ENCODE measurements at regions of chr12 and their contacts with region 1.

Region 1: GRCh38 chr12:92208613-92209121 is 63.0 kb upstream of the BTG1 start:
- DNase-seq: peak; percentile 42
- H3K4me3 Mint-ChIP-seq: peak overlapping the region; percentile 66
- H3K27ac Mint-ChIP-seq: peak overlapping the region; percentile 86
- H3K4me1 Mint-ChIP-seq: peaks cover 45% of the 10 kb centered on the region
- H3K27me3 Mint-ChIP-seq: no peaks in the 10 kb centered on the region

Region 2: DNA sequence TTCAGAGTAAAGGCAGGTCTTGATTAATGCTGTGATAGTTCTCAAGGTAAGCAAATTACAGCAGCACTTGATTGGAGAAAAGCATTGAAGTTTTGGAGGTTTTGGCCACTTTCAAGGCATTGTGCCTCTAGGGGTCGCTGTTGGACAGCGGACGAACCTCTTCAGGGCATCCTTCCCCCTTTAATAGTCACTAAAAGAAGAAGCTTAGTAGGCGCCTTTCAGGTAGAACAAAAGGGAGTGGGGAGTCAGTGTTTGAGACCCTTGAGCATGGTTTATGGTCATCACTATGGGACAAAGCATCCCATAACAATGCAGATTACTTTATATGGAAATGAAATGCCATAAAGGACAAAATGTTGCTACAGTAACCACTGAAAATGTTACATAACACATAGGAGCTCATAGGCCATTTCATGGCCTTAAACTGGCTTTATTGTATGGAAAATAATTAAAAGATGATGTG is 826.6 kb before region 1 on chr12:
- CTCF ChIA-PET with region 1: no interaction called
- intact Hi-C with region 1: loop called (anchors 1 kb)
- DNase-seq: peak; percentile 92
- H3K4me3 Mint-ChIP-seq: peak overlapping the region; percentile 76
- H3K27ac Mint-ChIP-seq: no peak overlapping the region
- H3K4me1 Mint-ChIP-seq: peaks cover 5% of the 10 kb centered on the region
- H3K27me3 Mint-ChIP-seq: no peaks in the 10 kb centered on the region

Region 3: GRCh38 chr12:91811481-91812287 is 397.0 kb before region 1 on chr12:
- CTCF ChIA-PET with region 1: interaction called, 7 read pairs
- intact Hi-C with region 1: loop called (anchors 2 kb)
- DNase-seq: peak; percentile 86
- H3K4me3 Mint-ChIP-seq: peak overlapping the region; percentile 23
- H3K27ac Mint-ChIP-seq: peak overlapping the region; percentile 76
- H3K4me1 Mint-ChIP-seq: peaks cover 21% of the 10 kb centered on the region
- H3K27me3 Mint-ChIP-seq: no peaks in the 10 kb centered on the region

Region 4: GRCh38 chr12:91833780-91834359 is 374.8 kb before region 1 on chr12:
- CTCF ChIA-PET with region 1: no interaction called
- intact Hi-C with region 1: no loop called
- DNase-seq: no peak
- H3K4me3 Mint-ChIP-seq: no peak overlapping the region
- H3K27ac Mint-ChIP-seq: no peak overlapping the region
- H3K4me1 Mint-ChIP-seq: peaks cover 17% of the 10 kb centered on the region
- H3K27me3 Mint-ChIP-seq: no peaks in the 10 kb centered on the region

Region 5: GRCh38 chr12:91991399-91992187 is 217.1 kb before region 1 on chr12:
- CTCF ChIA-PET with region 1: interaction called, 3 read pairs
- intact Hi-C with region 1: loop called (anchors 2 kb)
- DNase-seq: no peak
- H3K4me3 Mint-ChIP-seq: no peak overlapping the region
- H3K27ac Mint-ChIP-seq: no peak overlapping the region
- H3K4me1 Mint-ChIP-seq: peaks cover 61% of the 10 kb centered on the region
- H3K27me3 Mint-ChIP-seq: no peaks in the 10 kb centered on the region

Region 6: DNA sequence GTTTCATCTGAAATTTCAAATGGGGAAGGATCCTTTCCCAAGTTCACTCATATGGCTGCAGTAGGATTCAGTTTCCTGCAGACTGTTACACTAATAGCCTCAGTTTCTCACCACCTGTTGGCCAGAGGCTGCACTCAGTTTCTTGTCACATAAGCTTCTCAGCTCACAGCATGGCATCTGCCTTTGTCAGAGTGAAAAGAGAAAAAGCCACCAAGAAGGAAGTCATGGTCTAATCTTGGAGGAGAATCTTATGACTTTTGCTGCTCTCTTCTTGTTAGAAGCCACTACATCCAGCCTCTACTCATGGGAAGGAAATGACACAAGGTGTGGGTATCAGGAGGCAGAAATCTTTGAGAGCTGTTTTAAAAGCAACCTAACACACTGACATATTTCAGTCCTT is 23.6 kb before region 1 on chr12:
- CTCF ChIA-PET with region 1: no interaction called
- intact Hi-C with region 1: loop called (anchors 1 kb)
- DNase-seq: peak; percentile 62
- H3K4me3 Mint-ChIP-seq: peak overlapping the region; percentile 36
- H3K27ac Mint-ChIP-seq: peak overlapping the region; percentile 89
- H3K4me1 Mint-ChIP-seq: peaks cover 64% of the 10 kb centered on the region
- H3K27me3 Mint-ChIP-seq: no peaks in the 10 kb centered on the region

Region 7: GRCh38 chr12:92244036-92244435 is 35.4 kb after region 1 on chr12:
- CTCF ChIA-PET with region 1: no interaction called
- intact Hi-C with region 1: no loop called
- DNase-seq: no peak
- H3K4me3 Mint-ChIP-seq: no peak overlapping the region
- H3K27ac Mint-ChIP-seq: no peak overlapping the region
- H3K4me1 Mint-ChIP-seq: peaks cover 16% of the 10 kb centered on the region
- H3K27me3 Mint-ChIP-seq: no peaks in the 10 kb centered on the region

Measured in activated naive CD4-positive, alpha-beta T cell treated with anti-CD3 and anti-CD28 coated beads for 36 hours (primary cell).